Gastrocnemius medialis (tissue), 4 donors: ENCODE measurements at regions of chr7 and their contacts with region 1.

Region 1: DNA sequence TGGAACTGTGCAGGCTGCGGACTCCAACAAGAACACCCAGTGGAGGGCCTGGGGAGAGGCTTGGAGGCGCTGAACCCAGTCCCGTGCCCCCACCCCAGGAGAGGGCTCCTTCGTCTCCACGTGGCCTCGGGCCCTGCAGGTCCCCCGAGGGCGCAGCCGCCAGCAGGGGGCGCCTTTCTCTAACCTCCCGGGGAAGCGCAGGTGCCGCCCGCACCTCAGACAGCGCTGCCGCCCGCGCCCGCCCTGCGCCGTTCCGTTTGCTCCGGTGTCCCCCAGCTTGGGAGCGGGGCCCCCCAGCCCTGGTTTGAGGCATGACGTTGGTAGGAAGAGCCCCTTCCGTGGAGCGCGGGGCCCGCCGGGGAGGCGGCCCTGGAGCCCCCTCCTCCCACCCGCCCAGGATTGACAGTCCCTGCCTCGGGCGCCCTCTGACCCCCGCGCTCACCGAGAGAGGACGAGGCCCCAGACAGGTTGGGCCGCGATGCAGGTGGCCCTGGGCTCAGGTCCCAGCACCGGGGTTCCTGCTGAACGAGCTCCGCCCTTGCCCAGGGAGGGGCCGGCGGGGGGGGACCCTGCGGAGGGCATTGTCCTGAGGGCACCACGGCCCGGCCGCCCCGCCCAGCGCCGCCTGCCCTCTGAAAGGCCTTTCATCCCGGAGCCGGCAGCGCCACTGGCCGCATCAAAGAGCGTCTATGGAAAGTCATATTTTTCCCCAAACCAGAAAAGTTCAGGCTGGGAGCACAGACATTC is 42.8 kb downstream of the FOXL3 start:
- DNase-seq: peak; percentile 25 to 59
- ATAC-seq: peak; percentile 89 to 94
- H3K4me3 ChIP-seq: peak overlapping the region; percentile 48 to 74 (median 54)
- H3K27ac ChIP-seq: peak overlapping the region in 1 of 4 donors; percentile 38
- H3K4me1 ChIP-seq: peaks cover 5 to 9% of the 10 kb centered on the region in 2 donors
- H3K27me3 ChIP-seq: no peaks in the 10 kb centered on the region
- CTCF ChIP-seq: peak; percentile 71 to 96 (median 91)
- POLR2A ChIP-seq: no peak

Region 2: GRCh38 chr7:636396-636795 is 303.6 kb after region 1 on chr7:
- in situ Hi-C with region 1: no loop called
- intact Hi-C with region 1: loop called (anchors 2 kb)
- DNase-seq: no peak
- ATAC-seq: peak in 1 of 2 donors; percentile 36
- H3K4me3 ChIP-seq: no peak overlapping the region
- H3K27ac ChIP-seq: no peak overlapping the region
- H3K4me1 ChIP-seq: no peaks in the 10 kb centered on the region
- H3K27me3 ChIP-seq: no peaks in the 10 kb centered on the region
- CTCF ChIP-seq: peak in 4 of 5 experiments; percentile 7 to 50 (median 48)
- POLR2A ChIP-seq: no peak

Region 3: GRCh38 chr7:732094-732541 is 399.3 kb after region 1 on chr7:
- in situ Hi-C with region 1: loop called in 1 of 4 experiments (anchors 10 kb)
- intact Hi-C with region 1: loop called (anchors 2 kb)
- DNase-seq: peak; percentile 56 to 72
- ATAC-seq: peak; percentile 77 to 80
- H3K4me3 ChIP-seq: no peak overlapping the region
- H3K27ac ChIP-seq: peak overlapping the region; percentile 80 to 88 (median 82)
- H3K4me1 ChIP-seq: peaks cover 29 to 39% of the 10 kb centered on the region in 2 donors
- H3K27me3 ChIP-seq: no peaks in the 10 kb centered on the region
- CTCF ChIP-seq: peak in 3 of 5 experiments; percentile 47 to 49 (median 47)
- POLR2A ChIP-seq: no peak